GM12878 (cell line): ENCODE measurements at regions of chr19 and their contacts with region 1.

Region 1: DNA sequence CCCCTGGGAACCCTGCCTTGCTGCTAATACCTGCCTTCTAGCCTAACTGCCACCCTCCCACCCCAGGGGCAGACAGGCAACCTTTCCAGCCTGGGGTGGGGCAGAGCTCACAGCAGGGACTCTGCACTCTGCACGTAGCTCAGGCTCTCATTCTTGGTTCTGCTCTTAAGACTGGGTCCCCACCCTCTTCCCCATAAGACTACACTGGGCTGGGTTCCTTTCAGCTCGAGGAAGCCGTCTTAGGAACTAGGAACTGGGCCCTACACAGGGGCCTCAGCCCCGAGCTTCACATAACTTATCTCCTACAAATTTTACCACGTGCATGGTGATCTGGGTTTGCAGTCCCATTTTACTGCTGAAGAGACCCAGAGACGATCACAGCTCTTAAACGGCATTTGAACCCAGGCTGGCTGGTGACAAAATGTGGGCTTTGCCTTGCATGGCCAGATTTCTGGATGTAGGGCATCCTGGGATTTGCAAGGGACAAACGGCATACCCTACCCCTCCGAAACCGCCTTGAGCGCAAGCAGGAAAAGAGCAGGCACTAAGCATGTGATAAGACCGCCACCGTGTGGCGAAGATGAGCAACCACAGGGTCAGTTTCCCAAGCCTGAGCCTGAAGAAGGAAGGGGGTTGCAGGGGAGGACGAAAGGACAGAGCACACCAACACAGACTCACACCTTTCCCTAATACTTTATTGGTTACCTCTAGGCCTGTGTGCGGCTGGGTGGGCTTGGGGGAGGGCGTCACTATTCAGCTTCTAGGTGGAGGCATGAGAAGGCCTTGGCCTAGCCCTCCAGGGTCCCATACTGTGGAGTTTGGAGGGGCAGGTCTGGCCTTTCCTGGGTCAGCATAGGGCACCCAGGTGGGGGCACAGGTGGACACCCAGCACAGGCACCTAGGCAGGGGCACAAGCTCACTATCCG is 5.1 kb downstream of the JUNB start:
- DNase-seq: no peak
- ATAC-seq: peak; percentile 6; the same call in 2 of the 3 replicates
- H3K4me3 ChIP-seq: peak overlapping the region; percentile 14; the same call in 1 of the 2 replicates
- H3K27ac ChIP-seq: peak overlapping the region; percentile 60
- H3K4me1 ChIP-seq: peaks cover 22% of the 10 kb centered on the region
- H3K27me3 ChIP-seq: no peaks in the 10 kb centered on the region
- CTCF ChIP-seq: peak; percentile 94 to 98 (median 96); a peak in 5 of 6 replicates
- EP300 ChIP-seq: no peak
- POLR2A ChIP-seq: peak; percentile 48
- RAD21 ChIP-seq: peak; percentile 99

Region 2: DNA sequence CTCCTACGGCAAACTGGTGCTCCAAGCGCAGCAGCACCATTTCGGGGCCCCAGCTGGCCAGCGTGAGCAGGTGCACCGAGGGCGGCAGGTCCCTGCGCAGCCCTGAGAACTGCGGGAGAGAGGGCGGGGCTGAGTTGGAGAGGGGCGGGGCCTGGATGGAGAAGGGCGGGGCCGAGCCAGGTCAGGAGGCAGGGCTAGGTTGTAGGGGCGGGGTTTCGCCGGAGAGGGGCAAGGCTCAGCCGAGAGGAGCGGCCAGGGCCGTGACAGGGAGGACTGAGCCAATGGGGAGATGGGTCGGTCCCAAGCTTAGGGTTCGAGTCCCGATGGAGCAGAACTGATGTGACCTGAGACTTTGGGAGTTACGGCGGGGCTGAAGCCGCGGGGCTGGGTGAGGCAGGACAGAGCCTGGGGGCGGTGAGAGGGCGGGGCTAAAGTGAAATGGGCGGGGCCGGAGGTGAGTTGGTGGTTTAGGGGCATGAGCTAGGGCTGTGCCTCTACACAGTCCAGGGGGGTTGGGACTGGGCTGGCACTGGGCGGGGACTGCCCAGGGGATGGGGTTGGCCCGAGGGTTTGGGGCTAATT is 148.8 kb before region 1 on chr19:
- CTCF ChIA-PET with region 1: no interaction called
- POLR2A ChIA-PET with region 1: no interaction called
- RAD21 ChIA-PET with region 1: no interaction called
- SMC1A ChIA-PET with region 1: no interaction called
- in situ Hi-C with region 1: no loop called
- intact Hi-C with region 1: no loop called
- DNase-seq: no peak
- ATAC-seq: peak; percentile 78
- H3K4me3 ChIP-seq: no peak overlapping the region
- H3K27ac ChIP-seq: no peak overlapping the region
- H3K4me1 ChIP-seq: no peaks in the 10 kb centered on the region
- H3K27me3 ChIP-seq: no peaks in the 10 kb centered on the region
- CTCF ChIP-seq: no peak
- EP300 ChIP-seq: no peak
- POLR2A ChIP-seq: peak; percentile 51; the same call in 1 of the 2 replicates
- RAD21 ChIP-seq: no peak

Region 3: GRCh38 chr19:12681074-12681951 is 115.1 kb before region 1 on chr19 and contains the start of gene DHPS:
- CTCF ChIA-PET with region 1: interaction called, 7 read pairs
- POLR2A ChIA-PET with region 1: interaction called, 7 read pairs
- RAD21 ChIA-PET with region 1: interaction called, 3 read pairs
- SMC1A ChIA-PET with region 1: no interaction called
- in situ Hi-C with region 1: no loop called
- intact Hi-C with region 1: loop called (anchors 1 kb)
- DNase-seq: peak; percentile 95
- ATAC-seq: peak; percentile 91
- H3K4me3 ChIP-seq: peak within 1 kb of the TSS; percentile 99
- H3K27ac ChIP-seq: peak within 1 kb of the TSS; percentile 98
- H3K4me1 ChIP-seq: peaks cover 4% of the 10 kb centered on the region; the same call in 1 of the 2 replicates
- H3K27me3 ChIP-seq: no peaks in the 10 kb centered on the region
- CTCF ChIP-seq: no peak
- EP300 ChIP-seq: no peak
- POLR2A ChIP-seq: peak; percentile 98
- RAD21 ChIP-seq: no peak
- polyA plus RNA-seq, gene DHPS: 36.4 to 76.0 TPM

Region 4: GRCh38 chr19:12736995-12737834 is 59.2 kb before region 1 on chr19 and contains the start of gene GET3:
- CTCF ChIA-PET with region 1: interaction called, 19 read pairs
- POLR2A ChIA-PET with region 1: interaction called, 11 read pairs
- RAD21 ChIA-PET with region 1: interaction called, 7 read pairs
- SMC1A ChIA-PET with region 1: interaction called, 4 read pairs
- in situ Hi-C with region 1: no loop called
- intact Hi-C with region 1: no loop called
- DNase-seq: peak; percentile 99
- ATAC-seq: peak; percentile 92
- H3K4me3 ChIP-seq: peak within 1 kb of the TSS; percentile 90
- H3K27ac ChIP-seq: peak within 1 kb of the TSS; percentile 98
- H3K4me1 ChIP-seq: peaks cover 19% of the 10 kb centered on the region
- H3K27me3 ChIP-seq: no peaks in the 10 kb centered on the region
- CTCF ChIP-seq: no peak
- EP300 ChIP-seq: no peak
- POLR2A ChIP-seq: peak; percentile 93
- RAD21 ChIP-seq: no peak
- polyA plus RNA-seq, gene GET3: 14.5 to 22.0 TPM

Region 5: DNA sequence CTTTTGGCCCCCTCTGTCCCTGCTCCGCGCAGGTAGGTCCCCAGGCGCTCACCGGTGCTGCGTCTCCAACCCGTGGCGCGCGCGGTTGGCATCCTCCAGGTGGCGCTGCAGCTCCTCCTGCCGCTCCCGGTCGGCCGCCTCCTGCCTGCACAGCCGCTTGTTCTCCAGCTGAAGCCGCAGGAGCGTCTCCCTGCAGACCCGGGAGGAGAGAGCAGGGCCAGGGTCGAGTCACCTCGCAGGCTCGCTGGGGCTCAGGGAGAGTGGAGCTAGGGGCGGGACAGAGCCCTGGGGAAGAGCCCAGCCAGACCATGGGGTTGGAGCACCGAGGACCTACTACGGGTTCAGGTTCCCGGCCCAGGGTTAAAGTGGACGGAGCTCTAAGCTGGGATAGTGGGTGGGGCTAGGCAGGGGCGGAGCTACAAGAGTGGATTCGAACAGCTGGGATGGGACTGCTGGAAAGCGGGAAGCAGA is 30.3 kb before region 1 on chr19:
- CTCF ChIA-PET with region 1: interaction called, 426 read pairs
- POLR2A ChIA-PET with region 1: interaction called, 7 read pairs
- RAD21 ChIA-PET with region 1: interaction called, 28 read pairs
- SMC1A ChIA-PET with region 1: interaction called, 61 read pairs
- in situ Hi-C with region 1: loop called (anchors 5 kb)
- intact Hi-C with region 1: loop called (anchors 1 kb)
- DNase-seq: no peak
- ATAC-seq: peak; percentile 94
- H3K4me3 ChIP-seq: peak overlapping the region; percentile 49; the same call in 1 of the 2 replicates
- H3K27ac ChIP-seq: no peak overlapping the region
- H3K4me1 ChIP-seq: no peaks in the 10 kb centered on the region; the same call in 1 of the 2 replicates
- H3K27me3 ChIP-seq: no peaks in the 10 kb centered on the region; a peak in 1 of 4 replicates
- CTCF ChIP-seq: peak; percentile 80 to 96 (median 86)
- EP300 ChIP-seq: no peak
- POLR2A ChIP-seq: no peak
- RAD21 ChIP-seq: peak; percentile 65

Region 6: DNA sequence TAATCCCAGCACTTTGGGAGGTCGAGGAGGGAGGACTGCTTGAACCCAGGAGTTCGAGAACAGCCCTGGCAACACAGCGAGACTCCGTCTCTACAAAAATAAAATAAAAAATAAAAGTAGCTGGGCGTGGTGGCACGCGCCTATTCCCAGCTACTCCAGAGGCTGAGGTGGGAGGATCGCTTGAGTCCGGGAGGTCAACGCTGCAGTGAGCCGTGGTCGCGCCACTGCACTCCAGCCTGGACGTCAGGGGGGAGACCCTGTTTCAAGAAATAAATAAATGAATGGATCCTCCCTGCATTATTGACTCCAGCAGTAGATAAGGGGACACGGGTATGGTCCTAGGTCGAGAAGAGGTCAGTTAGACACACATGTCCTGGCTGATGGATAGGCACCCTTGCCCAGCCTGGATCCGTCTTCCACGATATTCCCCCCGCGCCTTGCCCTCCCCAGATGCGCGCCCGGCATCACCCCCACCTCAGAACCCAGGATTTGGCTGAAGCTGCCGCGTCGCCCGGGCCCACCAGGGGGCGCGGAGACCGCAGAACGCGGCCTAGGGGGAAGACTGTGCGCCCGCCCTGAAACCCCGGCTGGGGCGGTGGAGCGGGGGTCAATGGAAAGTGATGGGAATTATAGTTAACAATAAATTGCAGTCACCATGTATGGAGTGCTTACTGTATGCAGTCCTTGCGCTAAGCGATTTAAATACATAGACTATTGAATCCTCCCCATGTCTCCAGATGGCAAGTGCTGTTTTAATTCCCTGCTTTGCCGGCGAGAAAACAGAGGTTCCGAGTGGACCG is 19.0 kb before region 1 on chr19:
- CTCF ChIA-PET with region 1: interaction called, 537 read pairs
- POLR2A ChIA-PET with region 1: interaction called, 303 read pairs
- RAD21 ChIA-PET with region 1: interaction called, 303 read pairs
- SMC1A ChIA-PET with region 1: interaction called, 240 read pairs
- in situ Hi-C with region 1: no loop called
- intact Hi-C with region 1: loop called (anchors 1 kb)
- DNase-seq: no peak
- ATAC-seq: peak; percentile 68
- H3K4me3 ChIP-seq: peak overlapping the region; percentile 76
- H3K27ac ChIP-seq: peak overlapping the region; percentile 91
- H3K4me1 ChIP-seq: peaks cover 30% of the 10 kb centered on the region
- H3K27me3 ChIP-seq: no peaks in the 10 kb centered on the region
- CTCF ChIP-seq: peak; percentile 90 to 98 (median 95)
- EP300 ChIP-seq: no peak
- POLR2A ChIP-seq: no peak
- RAD21 ChIP-seq: peak; percentile 89

Region 7: GRCh38 chr19:12782229-12783028 is 14.0 kb before region 1 on chr19:
- CTCF ChIA-PET with region 1: interaction called, 537 read pairs
- POLR2A ChIA-PET with region 1: interaction called, 303 read pairs
- RAD21 ChIA-PET with region 1: interaction called, 303 read pairs
- SMC1A ChIA-PET with region 1: interaction called, 240 read pairs
- in situ Hi-C with region 1: no loop called
- intact Hi-C with region 1: loop called (anchors 1 kb)
- DNase-seq: no peak
- ATAC-seq: peak; percentile 58
- H3K4me3 ChIP-seq: peak overlapping the region; percentile 65
- H3K27ac ChIP-seq: peak overlapping the region; percentile 97
- H3K4me1 ChIP-seq: peaks cover 71% of the 10 kb centered on the region
- H3K27me3 ChIP-seq: no peaks in the 10 kb centered on the region
- CTCF ChIP-seq: no peak
- EP300 ChIP-seq: peak; percentile 80 to 81
- POLR2A ChIP-seq: peak; percentile 73
- RAD21 ChIP-seq: no peak

Region 8: DNA sequence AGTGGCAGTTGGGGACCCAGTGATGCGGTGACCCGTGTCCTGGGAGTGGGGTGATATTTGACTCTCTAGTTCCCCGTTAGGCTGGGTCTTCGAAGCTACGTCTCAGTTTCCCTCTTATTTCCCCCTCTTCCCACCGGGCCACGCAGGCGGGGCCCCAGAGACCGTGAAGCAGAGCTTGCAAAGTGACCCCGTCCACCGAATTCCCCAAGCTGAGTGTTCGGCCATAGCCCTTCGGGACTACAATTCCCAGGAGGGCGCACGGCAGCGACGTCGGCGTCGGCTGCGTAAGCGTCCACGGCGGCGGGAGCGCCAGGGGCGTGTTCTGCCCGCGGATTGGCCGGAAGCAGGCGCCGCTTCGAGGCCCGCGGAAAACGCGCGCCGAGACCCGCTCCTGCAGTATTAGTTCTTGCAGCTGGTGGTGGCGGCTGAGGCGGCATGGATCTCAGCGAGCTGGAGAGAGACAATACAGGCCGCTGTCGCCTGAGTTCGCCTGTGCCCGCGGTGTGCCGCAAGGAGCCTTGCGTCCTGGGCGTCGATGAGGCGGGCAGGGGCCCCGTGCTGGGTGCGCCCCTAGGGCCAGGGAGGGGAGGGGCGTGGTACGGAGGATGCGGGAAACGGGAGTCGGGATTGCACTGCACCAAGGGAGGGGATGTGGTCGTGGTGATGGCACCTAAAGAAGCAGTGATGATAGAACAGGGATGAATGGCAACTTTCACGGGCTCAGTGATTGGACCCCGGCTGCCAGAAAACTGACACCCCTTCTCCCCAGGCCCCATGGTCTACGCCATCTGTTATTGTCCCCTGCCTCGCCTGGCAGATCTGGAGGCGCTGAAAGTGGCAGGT is 10.1 kb after region 1 on chr19 and contains the start of gene RNASEH2A:
- CTCF ChIA-PET with region 1: interaction called, 12 read pairs
- POLR2A ChIA-PET with region 1: interaction called, 8 read pairs
- RAD21 ChIA-PET with region 1: interaction called, 11 read pairs
- SMC1A ChIA-PET with region 1: interaction called, 7 read pairs
- in situ Hi-C with region 1: no loop called
- intact Hi-C with region 1: no loop called
- DNase-seq: no peak
- ATAC-seq: peak; percentile 94
- H3K4me3 ChIP-seq: peak within 1 kb of the TSS; percentile 78
- H3K27ac ChIP-seq: peak within 1 kb of the TSS; percentile 74
- H3K4me1 ChIP-seq: peaks cover 13% of the 10 kb centered on the region
- H3K27me3 ChIP-seq: no peaks in the 10 kb centered on the region
- CTCF ChIP-seq: no peak
- EP300 ChIP-seq: no peak
- POLR2A ChIP-seq: peak; percentile 91
- RAD21 ChIP-seq: no peak
- polyA plus RNA-seq, gene RNASEH2A: 17.4 to 19.1 TPM

Region 9: GRCh38 chr19:12856653-12857052 is 60.2 kb after region 1 on chr19:
- CTCF ChIA-PET with region 1: no interaction called
- POLR2A ChIA-PET with region 1: no interaction called
- RAD21 ChIA-PET with region 1: no interaction called
- SMC1A ChIA-PET with region 1: no interaction called
- in situ Hi-C with region 1: no loop called
- intact Hi-C with region 1: no loop called
- DNase-seq: no peak
- ATAC-seq: no peak
- H3K4me3 ChIP-seq: no peak overlapping the region
- H3K27ac ChIP-seq: no peak overlapping the region
- H3K4me1 ChIP-seq: no peaks in the 10 kb centered on the region
- H3K27me3 ChIP-seq: no peaks in the 10 kb centered on the region
- CTCF ChIP-seq: no peak
- EP300 ChIP-seq: no peak
- POLR2A ChIP-seq: no peak
- RAD21 ChIP-seq: no peak